PC-3 (cell line): ENCODE measurements at regions of chr18 and their contacts with region 1.

Region 1: DNA sequence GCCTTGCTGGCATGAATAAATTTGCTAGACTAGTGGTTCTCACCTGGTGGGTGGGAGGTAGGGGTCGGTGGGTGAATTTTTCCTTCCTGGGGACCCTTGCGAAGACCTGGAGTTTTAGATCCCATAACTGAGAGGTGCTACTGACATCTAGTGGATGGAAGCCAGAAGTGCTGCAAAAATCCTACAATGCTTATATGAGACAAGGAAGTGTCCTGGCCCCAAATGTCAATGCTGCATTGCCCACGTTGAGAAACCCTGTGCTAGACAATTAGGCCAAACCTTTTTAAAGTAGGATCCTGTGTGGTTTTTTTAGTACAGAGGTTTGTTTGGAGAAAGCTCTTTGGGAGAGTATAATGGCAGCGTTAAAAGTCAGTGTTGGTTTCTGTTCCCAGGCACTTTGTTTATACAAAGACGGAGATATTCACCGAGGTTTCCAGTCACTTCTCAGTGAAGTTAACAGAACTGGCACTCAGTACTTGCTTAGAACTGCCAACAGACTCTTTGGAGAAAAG is 9.6 kb downstream of the SERPINB8 start:
- DNase-seq: peak; percentile 79
- ATAC-seq: peak; percentile 71
- H3K4me3 ChIP-seq: no peak overlapping the region
- H3K27ac ChIP-seq: no peak overlapping the region
- H3K4me1 ChIP-seq: 0 out of 2 replicates have a peak, but pooled peaks cover 3% of the 10 kb centered on the region
- H3K27me3 ChIP-seq: no peaks in the 10 kb centered on the region
- CTCF ChIP-seq: peak; percentile 90

Region 2: GRCh38 chr18:63753676-63754075 is 225.8 kb before region 1 on chr18:
- CTCF ChIA-PET with region 1: no interaction called
- POLR2A ChIA-PET with region 1: no interaction called
- intact Hi-C with region 1: no loop called
- DNase-seq: no peak
- ATAC-seq: no peak
- H3K4me3 ChIP-seq: no peak overlapping the region
- H3K27ac ChIP-seq: no peak overlapping the region
- H3K4me1 ChIP-seq: no peaks in the 10 kb centered on the region; the same call in 1 of the 2 replicates
- H3K27me3 ChIP-seq: no peaks in the 10 kb centered on the region
- CTCF ChIP-seq: no peak

Region 3: DNA sequence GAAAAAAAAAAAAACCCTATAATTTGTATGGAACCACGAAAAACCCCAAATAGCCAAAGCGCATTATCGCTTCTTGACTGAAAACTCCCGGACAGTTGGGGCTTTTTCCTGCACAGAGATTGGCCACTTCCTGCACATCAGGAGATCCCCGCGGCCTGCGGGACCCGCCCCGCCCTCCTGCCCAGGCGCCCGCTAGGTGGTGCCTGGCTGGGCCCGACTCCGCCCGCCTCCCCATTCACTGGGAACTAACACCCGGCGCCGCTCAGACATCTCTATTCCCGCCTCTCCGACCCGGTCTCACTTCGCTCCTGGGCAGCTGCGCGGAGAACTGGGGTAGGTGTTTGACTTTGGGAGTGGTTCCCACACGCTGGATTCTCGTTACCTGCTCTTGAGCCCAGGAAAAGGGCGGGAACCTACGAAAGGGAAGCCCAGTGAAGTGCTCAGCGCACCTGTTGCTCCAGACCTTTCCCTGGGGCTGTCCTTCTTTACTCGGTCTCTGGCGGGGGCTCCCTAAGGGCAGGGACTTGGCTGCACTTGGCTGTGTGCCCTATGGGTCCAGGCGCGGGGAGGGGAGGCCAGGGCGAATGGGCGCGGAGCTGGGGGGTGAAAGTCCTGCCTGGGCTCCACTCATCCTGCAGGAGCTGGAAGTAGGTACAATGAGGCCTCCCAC is 30.3 kb before region 1 on chr18 and contains the start of gene HMSD:
- CTCF ChIA-PET with region 1: no interaction called
- POLR2A ChIA-PET with region 1: no interaction called
- intact Hi-C with region 1: loop called (anchors 1 kb)
- DNase-seq: peak; percentile 72
- ATAC-seq: peak; percentile 99
- H3K4me3 ChIP-seq: peak within 1 kb of the TSS; percentile 54
- H3K27ac ChIP-seq: no peak within 1 kb of the TSS
- H3K4me1 ChIP-seq: peaks cover 22% of the 10 kb centered on the region; the same call in 1 of the 2 replicates
- H3K27me3 ChIP-seq: no peaks in the 10 kb centered on the region
- CTCF ChIP-seq: peak; percentile 56
- total RNA-seq, gene HMSD: 0.12 and 0.40 TPM in 2 replicates

Region 4: GRCh38 chr18:63963615-63964256 is 15.7 kb before region 1 on chr18:
- CTCF ChIA-PET with region 1: interaction called, 8 read pairs
- POLR2A ChIA-PET with region 1: no interaction called
- intact Hi-C with region 1: loop called (anchors 1 kb)
- DNase-seq: peak; percentile 76
- ATAC-seq: peak; percentile 93
- H3K4me3 ChIP-seq: no peak overlapping the region
- H3K27ac ChIP-seq: no peak overlapping the region
- H3K4me1 ChIP-seq: no peaks in the 10 kb centered on the region
- H3K27me3 ChIP-seq: no peaks in the 10 kb centered on the region
- CTCF ChIP-seq: peak; percentile 85

Region 5: DNA sequence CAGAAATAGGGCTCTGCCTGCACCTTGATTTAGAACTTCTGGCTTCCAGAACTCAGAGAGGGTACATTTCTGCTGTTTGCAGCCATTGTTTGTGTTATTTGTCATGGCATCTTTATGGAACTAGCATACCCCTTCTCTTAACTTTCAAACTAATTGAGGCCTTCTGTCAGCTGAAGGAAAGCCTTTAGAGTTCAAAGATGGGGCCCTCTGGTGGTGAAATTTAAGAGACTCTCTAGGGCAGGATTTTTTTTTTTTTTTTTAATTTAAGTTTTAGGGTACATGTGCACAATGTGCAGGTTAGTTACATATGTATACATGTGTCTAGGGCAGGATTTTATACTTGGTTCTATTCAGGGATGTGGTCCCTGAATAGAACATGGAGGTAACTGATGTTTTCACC is 430.0 kb after region 1 on chr18:
- CTCF ChIA-PET with region 1: no interaction called
- POLR2A ChIA-PET with region 1: no interaction called
- intact Hi-C with region 1: no loop called
- DNase-seq: peak; percentile 50
- ATAC-seq: peak; percentile 31; the same call in 1 of the 2 replicates
- H3K4me3 ChIP-seq: no peak overlapping the region
- H3K27ac ChIP-seq: no peak overlapping the region
- H3K4me1 ChIP-seq: no peaks in the 10 kb centered on the region
- H3K27me3 ChIP-seq: no peaks in the 10 kb centered on the region
- CTCF ChIP-seq: peak; percentile 64